ENCODE measurements at regions of chr1 and their contacts with region 1.

Region 1: GRCh38 chr1:226827968-226828513 is 42.4 kb upstream of the PSEN2 start:
- DNase-seq: peak; percentile 90
- H3K4me3 Mint-ChIP-seq: peak overlapping the region; percentile 39
- H3K27ac Mint-ChIP-seq: peak overlapping the region; percentile 90
- H3K4me1 Mint-ChIP-seq: peaks cover 21% of the 10 kb centered on the region
- H3K27me3 Mint-ChIP-seq: peaks cover 3% of the 10 kb centered on the region

Region 2: GRCh38 chr1:226547754-226548191 is 280.3 kb before region 1 on chr1:
- intact Hi-C with region 1: loop called (anchors 5 kb)
- DNase-seq: peak; percentile 44
- H3K4me3 Mint-ChIP-seq: no peak overlapping the region
- H3K27ac Mint-ChIP-seq: no peak overlapping the region
- H3K4me1 Mint-ChIP-seq: peaks cover 10% of the 10 kb centered on the region
- H3K27me3 Mint-ChIP-seq: peaks cover 66% of the 10 kb centered on the region

Region 3: GRCh38 chr1:226786550-226786949 is 41.5 kb before region 1 on chr1:
- intact Hi-C with region 1: no loop called
- DNase-seq: no peak
- H3K4me3 Mint-ChIP-seq: no peak overlapping the region
- H3K27ac Mint-ChIP-seq: no peak overlapping the region
- H3K4me1 Mint-ChIP-seq: peaks cover 7% of the 10 kb centered on the region
- H3K27me3 Mint-ChIP-seq: peaks cover 20% of the 10 kb centered on the region

Region 4: DNA sequence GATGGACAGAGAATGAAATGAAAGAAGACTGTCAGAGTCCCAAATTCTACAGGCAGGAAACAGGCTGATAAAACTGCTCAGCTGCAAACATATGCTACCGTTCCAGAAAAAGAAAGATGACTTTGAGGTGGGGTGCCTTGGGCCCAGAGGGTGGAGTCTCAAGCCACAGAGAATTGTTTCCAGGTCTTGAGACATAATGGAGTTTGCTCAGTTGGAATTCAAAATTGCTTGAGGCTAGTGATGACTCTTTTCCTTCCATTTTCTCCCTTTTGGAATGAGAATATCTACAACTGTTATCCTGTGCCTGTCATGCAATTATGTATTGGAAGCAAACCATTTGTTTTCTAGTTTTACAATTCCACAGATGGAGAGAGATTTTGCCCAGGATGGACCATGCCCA is 18.8 kb after region 1 on chr1:
- intact Hi-C with region 1: no loop called
- DNase-seq: no peak
- H3K4me3 Mint-ChIP-seq: no peak overlapping the region
- H3K27ac Mint-ChIP-seq: no peak overlapping the region
- H3K4me1 Mint-ChIP-seq: peaks cover 1% of the 10 kb centered on the region
- H3K27me3 Mint-ChIP-seq: peaks cover 5% of the 10 kb centered on the region

Region 5: GRCh38 chr1:226912587-226913176 is 84.6 kb after region 1 on chr1:
- intact Hi-C with region 1: no loop called
- DNase-seq: peak; percentile 22
- H3K4me3 Mint-ChIP-seq: no peak overlapping the region
- H3K27ac Mint-ChIP-seq: no peak overlapping the region
- H3K4me1 Mint-ChIP-seq: peaks cover 17% of the 10 kb centered on the region
- H3K27me3 Mint-ChIP-seq: no peaks in the 10 kb centered on the region

Measured in activated T-helper 2 cell treated with anti-CD3 and anti-CD28 coated beads, Interferon-gamma antibody, Interleukin-2, Interleukin-4, amounts not matched to agents 10 μg/mL and 5 μg/mL and 100 μg/mL, durations not matched to agents 14 hours and 24 hours and 36 hours (primary cell).